Caco-2 (cell line): ENCODE measurements at regions of chr17 and their contacts with region 1.

Region 1: GRCh38 chr17:13594762-13595598 is 6.7 kb downstream of the HS3ST3A1 start:
- DNase-seq: peak; percentile 53 to 64
- H3K4me3 ChIP-seq: no peak overlapping the region
- H3K4me3 Mint-ChIP-seq: no peak overlapping the region
- H3K27ac Mint-ChIP-seq: no peak overlapping the region
- H3K4me1 ChIP-seq: no peaks in the 10 kb centered on the region
- H3K4me1 Mint-ChIP-seq: no peaks in the 10 kb centered on the region
- H3K27me3 ChIP-seq: no peaks in the 10 kb centered on the region
- H3K27me3 Mint-ChIP-seq: no peaks in the 10 kb centered on the region
- CTCF ChIP-seq: peak; percentile 53 to 59

Region 2: GRCh38 chr17:13031718-13032350 is 563.1 kb before region 1 on chr17:
- CTCF ChIA-PET with region 1: no interaction called
- POLR2A ChIA-PET with region 1: no interaction called
- intact Hi-C with region 1: loop called (anchors 5 kb)
- DNase-seq: peak in 1 of 2 experiments; percentile 13
- H3K4me3 ChIP-seq: no peak overlapping the region
- H3K4me3 Mint-ChIP-seq: no peak overlapping the region
- H3K27ac Mint-ChIP-seq: no peak overlapping the region
- H3K4me1 ChIP-seq: no peaks in the 10 kb centered on the region
- H3K4me1 Mint-ChIP-seq: no peaks in the 10 kb centered on the region
- H3K27me3 ChIP-seq: no peaks in the 10 kb centered on the region
- H3K27me3 Mint-ChIP-seq: no peaks in the 10 kb centered on the region
- CTCF ChIP-seq: peak; percentile 29 to 39

Region 3: DNA sequence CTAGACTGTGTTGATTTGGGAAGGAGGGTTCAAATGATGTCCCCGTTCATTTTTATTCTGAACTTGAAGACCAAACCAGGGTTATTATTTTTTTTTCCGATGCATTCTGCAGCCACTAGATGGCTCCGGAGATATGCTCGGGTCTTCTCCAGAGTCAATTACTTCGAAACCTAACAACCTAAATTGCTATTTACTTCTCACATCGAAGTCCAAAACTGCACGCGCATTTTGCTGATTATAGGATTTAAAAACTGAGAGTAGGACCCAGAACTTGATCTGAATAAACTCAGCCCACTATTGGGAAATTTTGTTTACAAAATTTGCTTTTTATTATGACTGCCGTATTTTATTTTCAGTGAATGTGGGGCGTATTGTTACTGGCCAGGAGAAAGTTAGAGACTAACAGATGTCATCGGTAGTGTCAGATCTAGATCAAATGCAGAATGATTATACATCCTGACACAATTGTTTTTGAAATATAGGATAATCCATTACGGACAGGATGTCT is 257.1 kb before region 1 on chr17:
- CTCF ChIA-PET with region 1: no interaction called
- POLR2A ChIA-PET with region 1: no interaction called
- intact Hi-C with region 1: loop called (anchors 5 kb)
- DNase-seq: peak in 1 of 2 experiments; percentile 20
- H3K4me3 ChIP-seq: no peak overlapping the region
- H3K4me3 Mint-ChIP-seq: peak overlapping the region; percentile 29
- H3K27ac Mint-ChIP-seq: no peak overlapping the region
- H3K4me1 ChIP-seq: no peaks in the 10 kb centered on the region
- H3K4me1 Mint-ChIP-seq: no peaks in the 10 kb centered on the region
- H3K27me3 ChIP-seq: no peaks in the 10 kb centered on the region
- H3K27me3 Mint-ChIP-seq: no peaks in the 10 kb centered on the region
- CTCF ChIP-seq: peak; percentile 41 to 63

Region 4: GRCh38 chr17:13665872-13666635 is 71.1 kb after region 1 on chr17:
- CTCF ChIA-PET with region 1: no interaction called
- POLR2A ChIA-PET with region 1: no interaction called
- intact Hi-C with region 1: no loop called
- DNase-seq: no peak
- H3K4me3 ChIP-seq: no peak overlapping the region
- H3K4me3 Mint-ChIP-seq: no peak overlapping the region
- H3K27ac Mint-ChIP-seq: no peak overlapping the region
- H3K4me1 ChIP-seq: no peaks in the 10 kb centered on the region
- H3K4me1 Mint-ChIP-seq: no peaks in the 10 kb centered on the region
- H3K27me3 ChIP-seq: no peaks in the 10 kb centered on the region
- H3K27me3 Mint-ChIP-seq: no peaks in the 10 kb centered on the region
- CTCF ChIP-seq: no peak

Region 5: GRCh38 chr17:14300575-14301278 is 705.7 kb after region 1 on chr17 and contains the start of gene HS3ST3B1:
- CTCF ChIA-PET with region 1: interaction called, 4 read pairs
- POLR2A ChIA-PET with region 1: no interaction called
- intact Hi-C with region 1: loop called (anchors 1 kb)
- DNase-seq: peak; percentile 96 to 97
- H3K4me3 ChIP-seq: peak within 1 kb of the TSS; percentile 57
- H3K4me3 Mint-ChIP-seq: peak within 1 kb of the TSS; percentile 79
- H3K27ac Mint-ChIP-seq: no peak within 1 kb of the TSS
- H3K4me1 ChIP-seq: no peaks in the 10 kb centered on the region
- H3K4me1 Mint-ChIP-seq: no peaks in the 10 kb centered on the region
- H3K27me3 ChIP-seq: no peaks in the 10 kb centered on the region; the same call in 1 of the 2 replicates
- H3K27me3 Mint-ChIP-seq: peaks cover 7% of the 10 kb centered on the region
- CTCF ChIP-seq: peak in 1 of 2 experiments; percentile 0
- total RNA-seq, gene HS3ST3B1: 1.8 and 1.9 TPM in 2 replicates

Region 6: DNA sequence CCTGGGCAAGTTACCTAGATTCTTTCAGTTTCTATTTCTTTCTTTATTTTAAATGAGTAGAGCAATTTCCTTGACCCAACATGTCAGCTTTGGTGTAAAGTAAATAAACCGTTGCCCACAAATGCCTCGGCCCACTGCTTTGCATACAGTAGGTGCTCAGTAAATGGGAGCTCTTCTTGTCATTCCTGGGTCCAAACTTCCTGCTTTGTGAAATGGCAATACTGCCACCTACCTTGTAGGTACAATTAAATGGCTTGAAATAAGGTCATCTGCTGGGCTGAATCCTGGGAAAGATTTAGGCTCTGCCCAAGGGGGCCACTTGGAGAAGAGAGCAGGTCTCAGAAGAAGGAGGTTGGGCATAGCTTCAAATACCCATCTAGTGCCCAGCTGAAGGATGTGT is 958.9 kb after region 1 on chr17:
- CTCF ChIA-PET with region 1: no interaction called
- POLR2A ChIA-PET with region 1: no interaction called
- intact Hi-C with region 1: loop called (anchors 10 kb)
- DNase-seq: no peak
- H3K4me3 ChIP-seq: no peak overlapping the region
- H3K4me3 Mint-ChIP-seq: no peak overlapping the region
- H3K27ac Mint-ChIP-seq: no peak overlapping the region
- H3K4me1 ChIP-seq: no peaks in the 10 kb centered on the region
- H3K4me1 Mint-ChIP-seq: no peaks in the 10 kb centered on the region
- H3K27me3 ChIP-seq: no peaks in the 10 kb centered on the region
- H3K27me3 Mint-ChIP-seq: no peaks in the 10 kb centered on the region
- CTCF ChIP-seq: no peak